ENCODE measurements at regions of chr20 and their contacts with region 1.

Region 1: GRCh38 chr20:32652739-32653526 is 20.8 kb downstream of the C20orf203 start:
- DNase-seq: peak; percentile 79
- ATAC-seq: peak; percentile 97
- H3K4me3 Mint-ChIP-seq: no peak overlapping the region
- H3K27ac Mint-ChIP-seq: no peak overlapping the region
- H3K4me1 Mint-ChIP-seq: peaks cover 8% of the 10 kb centered on the region
- H3K27me3 Mint-ChIP-seq: peaks cover 3% of the 10 kb centered on the region
- CTCF ChIP-seq: peak; percentile 74

Region 2: DNA sequence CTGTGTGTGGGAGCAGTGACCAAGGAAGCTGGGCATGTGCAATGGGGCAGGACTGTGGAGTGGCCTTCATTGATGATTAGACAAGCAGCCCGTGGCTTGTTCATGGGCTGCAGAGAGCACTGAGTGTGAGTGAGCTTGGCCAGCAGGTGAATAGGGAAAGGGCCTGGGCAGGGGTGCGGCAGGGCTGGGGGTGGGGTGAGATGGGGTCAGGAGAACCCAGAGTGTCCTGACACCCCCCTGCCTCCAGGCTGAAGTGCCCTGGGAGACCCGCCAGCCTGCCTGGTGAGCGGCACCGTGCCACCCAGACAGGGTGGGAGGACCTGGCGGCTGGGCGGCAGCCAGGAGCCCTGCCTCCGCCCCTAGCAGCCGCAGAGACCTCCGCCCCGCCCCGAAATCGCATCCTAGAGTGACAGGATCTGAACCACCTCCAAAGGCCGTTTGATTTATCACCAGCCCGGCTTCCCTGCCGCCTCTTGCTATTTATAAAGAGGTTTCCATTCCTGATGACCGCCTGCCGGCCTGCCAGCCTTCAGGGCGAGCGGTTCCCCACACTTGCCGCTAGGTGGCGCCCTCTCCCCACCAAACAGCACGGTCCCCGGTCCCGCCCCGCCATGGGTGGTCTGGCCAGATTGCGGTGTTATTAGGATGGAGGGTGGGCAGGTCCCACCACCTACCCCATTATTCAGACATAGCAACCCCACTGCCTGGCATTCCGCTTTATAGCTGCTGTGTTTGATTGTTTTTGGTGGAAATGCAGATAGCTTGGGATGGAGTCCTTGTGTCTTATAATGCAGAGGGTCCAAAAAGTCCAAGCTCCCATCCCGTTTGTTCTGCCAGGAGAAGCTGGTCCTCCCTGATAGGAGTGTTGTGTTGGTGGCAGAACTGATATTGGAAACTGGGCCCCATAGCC is 830.3 kb before region 1 on chr20:
- CTCF ChIA-PET with region 1: interaction called, 6 read pairs
- POLR2A ChIA-PET with region 1: no interaction called
- intact Hi-C with region 1: loop called (anchors 1 kb)
- DNase-seq: peak; percentile 79
- ATAC-seq: peak; percentile 97
- H3K4me3 Mint-ChIP-seq: no peak overlapping the region
- H3K27ac Mint-ChIP-seq: no peak overlapping the region
- H3K4me1 Mint-ChIP-seq: peaks cover 4% of the 10 kb centered on the region
- H3K27me3 Mint-ChIP-seq: no peaks in the 10 kb centered on the region
- CTCF ChIP-seq: peak; percentile 92

Region 3: DNA sequence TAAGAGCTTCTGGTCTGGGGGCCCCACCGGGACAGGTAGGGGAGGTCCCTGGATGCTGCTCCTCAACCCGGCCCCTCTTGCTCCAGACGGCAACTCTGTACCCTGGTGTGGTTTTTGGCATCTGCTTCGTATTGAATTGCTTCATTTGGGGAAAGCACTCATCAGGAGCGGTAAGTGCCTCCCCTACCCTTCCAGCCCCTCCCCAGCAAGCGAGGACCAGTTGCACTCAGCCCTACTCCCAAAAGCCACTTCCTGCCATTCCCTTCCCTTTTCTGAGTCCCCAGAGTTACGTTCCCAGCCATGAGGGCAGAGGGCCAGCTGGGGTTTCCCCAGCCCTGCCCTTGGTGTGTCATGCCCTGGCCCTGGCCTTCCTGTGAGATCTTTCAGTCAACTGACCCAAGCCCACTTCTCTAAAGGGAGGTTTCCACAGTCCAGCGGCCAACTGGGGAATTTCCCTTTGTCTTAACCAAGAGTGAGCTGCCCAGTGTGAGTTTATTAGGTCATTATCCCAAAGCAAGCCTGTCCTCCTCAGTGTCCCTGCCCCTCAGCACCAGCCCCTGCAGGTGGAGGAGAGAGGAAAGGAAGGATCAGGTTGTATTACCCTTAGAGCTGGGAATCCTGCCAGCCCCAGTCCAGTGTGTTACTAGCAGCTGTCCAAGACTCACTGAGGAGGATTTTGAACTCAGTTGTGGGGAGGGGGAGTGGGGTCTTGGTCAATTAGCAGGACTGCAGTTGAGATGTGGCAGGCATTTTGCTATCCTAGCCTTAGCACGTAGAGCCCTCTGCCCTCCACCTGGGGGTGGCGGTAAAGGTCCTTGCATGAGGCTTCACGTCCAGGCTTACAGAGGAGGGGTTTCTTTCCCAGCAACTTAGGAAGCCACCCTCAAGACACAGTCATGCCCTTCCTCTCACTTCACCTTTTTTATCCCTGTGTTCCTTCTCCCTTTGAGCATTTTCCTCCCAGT is 497.6 kb before region 1 on chr20:
- CTCF ChIA-PET with region 1: no interaction called
- POLR2A ChIA-PET with region 1: no interaction called
- intact Hi-C with region 1: loop called (anchors 1 kb)
- DNase-seq: no peak
- ATAC-seq: peak; percentile 21
- H3K4me3 Mint-ChIP-seq: no peak overlapping the region
- H3K27ac Mint-ChIP-seq: peak overlapping the region; percentile 30
- H3K4me1 Mint-ChIP-seq: peaks cover 5% of the 10 kb centered on the region
- H3K27me3 Mint-ChIP-seq: no peaks in the 10 kb centered on the region
- CTCF ChIP-seq: no peak

Region 4: GRCh38 chr20:32456869-32457478 is 196.0 kb before region 1 on chr20:
- CTCF ChIA-PET with region 1: no interaction called
- POLR2A ChIA-PET with region 1: no interaction called
- intact Hi-C with region 1: loop called (anchors 10 kb)
- DNase-seq: peak; percentile 52
- ATAC-seq: peak; percentile 66
- H3K4me3 Mint-ChIP-seq: no peak overlapping the region
- H3K27ac Mint-ChIP-seq: no peak overlapping the region
- H3K4me1 Mint-ChIP-seq: peaks cover 13% of the 10 kb centered on the region
- H3K27me3 Mint-ChIP-seq: no peaks in the 10 kb centered on the region
- CTCF ChIP-seq: no peak

Region 5: GRCh38 chr20:32521780-32522525 is 131.0 kb before region 1 on chr20:
- CTCF ChIA-PET with region 1: interaction called, 178 read pairs
- POLR2A ChIA-PET with region 1: interaction called, 8 read pairs
- intact Hi-C with region 1: loop called (anchors 1 kb)
- DNase-seq: peak; percentile 53
- ATAC-seq: peak; percentile 73
- H3K4me3 Mint-ChIP-seq: no peak overlapping the region
- H3K27ac Mint-ChIP-seq: no peak overlapping the region
- H3K4me1 Mint-ChIP-seq: peaks cover 40% of the 10 kb centered on the region
- H3K27me3 Mint-ChIP-seq: no peaks in the 10 kb centered on the region
- CTCF ChIP-seq: no peak

Region 6: GRCh38 chr20:32743237-32744112 is 90.5 kb after region 1 on chr20 and contains the start of gene COMMD7:
- CTCF ChIA-PET with region 1: no interaction called
- POLR2A ChIA-PET with region 1: no interaction called
- intact Hi-C with region 1: no loop called
- DNase-seq: peak; percentile 67
- ATAC-seq: peak; percentile 81
- H3K4me3 Mint-ChIP-seq: peak within 1 kb of the TSS; percentile 94
- H3K27ac Mint-ChIP-seq: peak within 1 kb of the TSS; percentile 89
- H3K4me1 Mint-ChIP-seq: peaks cover 29% of the 10 kb centered on the region
- H3K27me3 Mint-ChIP-seq: no peaks in the 10 kb centered on the region
- CTCF ChIP-seq: no peak
- total RNA-seq, gene COMMD7: 35.5 and 37.9 TPM in 2 replicates

Measured in activated B cell treated with CpG ODN at 0.5 μM for 24 hours (primary cell).